IMR-90 (cell line): ENCODE measurements at regions of chr3 and their contacts with region 1.

Region 1: DNA sequence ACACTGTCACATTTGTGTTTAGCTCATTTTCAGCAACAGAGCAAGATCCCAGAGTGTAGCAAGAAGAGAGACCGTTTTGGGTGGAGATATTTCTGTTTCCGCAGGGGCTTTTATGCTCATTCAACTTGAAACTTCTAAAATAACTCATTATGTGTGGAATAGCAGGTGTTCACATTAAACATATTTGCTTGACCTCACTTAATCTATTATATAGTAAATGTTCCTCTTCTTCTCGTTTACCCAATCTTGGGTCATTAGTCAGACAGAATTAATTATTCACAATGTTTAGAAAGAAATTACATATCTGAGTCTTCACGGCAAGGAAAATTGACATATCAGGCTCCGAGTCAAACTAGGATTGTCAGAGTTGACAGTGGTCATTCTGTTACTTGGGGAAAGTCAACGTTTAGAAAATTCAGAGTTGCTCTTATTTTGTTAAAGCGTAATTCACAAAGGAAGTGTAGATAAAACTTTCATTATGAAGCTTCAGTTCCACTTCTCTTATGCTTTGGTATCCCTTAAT is 222.9 kb downstream of the TPRG1 start:
- DNase-seq: no peak
- ATAC-seq: no peak
- H3K4me3 ChIP-seq: no peak overlapping the region
- H3K27ac ChIP-seq: no peak overlapping the region
- H3K4me1 ChIP-seq: no peaks in the 10 kb centered on the region
- H3K27me3 ChIP-seq: no peaks in the 10 kb centered on the region
- CTCF ChIP-seq: no peak
- POLR2A ChIP-seq: no peak
- RAD21 ChIP-seq: no peak

Region 2: DNA sequence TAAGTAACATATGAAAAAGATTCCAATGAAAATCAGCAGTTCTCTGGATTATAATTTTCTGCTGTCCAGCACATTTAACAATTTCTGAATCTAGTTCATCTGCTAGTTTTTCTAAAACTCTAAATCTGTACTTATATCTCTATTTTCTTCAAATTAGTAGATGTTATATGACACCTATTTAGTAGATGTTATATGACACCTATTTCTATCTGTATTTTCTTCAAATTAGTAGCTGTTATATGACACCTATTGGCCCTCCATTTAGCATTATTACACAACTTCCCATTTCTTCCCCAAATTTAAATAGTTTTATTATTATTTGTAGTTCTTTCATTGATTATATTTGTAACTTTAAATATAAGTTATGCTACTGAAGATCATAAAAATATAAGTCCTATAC is 15.1 kb after region 1 on chr3:
- CTCF ChIA-PET with region 1: no interaction called
- POLR2A ChIA-PET with region 1: no interaction called
- dilution Hi-C with region 1: no loop called
- in situ Hi-C with region 1: no loop called
- intact Hi-C with region 1: loop called (anchors 2 kb)
- DNase-seq: no peak
- ATAC-seq: no peak
- H3K4me3 ChIP-seq: no peak overlapping the region
- H3K27ac ChIP-seq: no peak overlapping the region
- H3K4me1 ChIP-seq: no peaks in the 10 kb centered on the region
- H3K27me3 ChIP-seq: no peaks in the 10 kb centered on the region
- CTCF ChIP-seq: no peak
- POLR2A ChIP-seq: no peak
- RAD21 ChIP-seq: no peak

Region 3: GRCh38 chr3:189537135-189537534 is 142.5 kb after region 1 on chr3:
- CTCF ChIA-PET with region 1: no interaction called
- POLR2A ChIA-PET with region 1: no interaction called
- dilution Hi-C with region 1: no loop called
- in situ Hi-C with region 1: no loop called
- intact Hi-C with region 1: no loop called
- DNase-seq: no peak
- ATAC-seq: no peak
- H3K4me3 ChIP-seq: no peak overlapping the region
- H3K27ac ChIP-seq: no peak overlapping the region
- H3K4me1 ChIP-seq: no peaks in the 10 kb centered on the region
- H3K27me3 ChIP-seq: no peaks in the 10 kb centered on the region
- CTCF ChIP-seq: no peak
- POLR2A ChIP-seq: no peak
- RAD21 ChIP-seq: no peak